ENCODE measurements at regions of chr12 and their contacts with region 1.

Region 1: GRCh38 chr12:48924617-48925303 is 532 bp downstream of the FKBP11 start:
- DNase-seq: peak; percentile 77
- H3K4me3 ChIP-seq: peak overlapping the region; percentile 62 to 81 (median 78)
- H3K27ac ChIP-seq: peak overlapping the region in 3 of 4 donors; percentile 57 to 60 (median 58)
- H3K4me1 ChIP-seq: peaks cover 0 to 14% (median 8%) of the 10 kb centered on the region in 4 donors
- H3K27me3 ChIP-seq: no peaks in the 10 kb centered on the region
- CTCF ChIP-seq: peak; percentile 17 to 39 (median 32)
- EP300 ChIP-seq: no peak
- POLR2A ChIP-seq: no peak

Region 2: DNA sequence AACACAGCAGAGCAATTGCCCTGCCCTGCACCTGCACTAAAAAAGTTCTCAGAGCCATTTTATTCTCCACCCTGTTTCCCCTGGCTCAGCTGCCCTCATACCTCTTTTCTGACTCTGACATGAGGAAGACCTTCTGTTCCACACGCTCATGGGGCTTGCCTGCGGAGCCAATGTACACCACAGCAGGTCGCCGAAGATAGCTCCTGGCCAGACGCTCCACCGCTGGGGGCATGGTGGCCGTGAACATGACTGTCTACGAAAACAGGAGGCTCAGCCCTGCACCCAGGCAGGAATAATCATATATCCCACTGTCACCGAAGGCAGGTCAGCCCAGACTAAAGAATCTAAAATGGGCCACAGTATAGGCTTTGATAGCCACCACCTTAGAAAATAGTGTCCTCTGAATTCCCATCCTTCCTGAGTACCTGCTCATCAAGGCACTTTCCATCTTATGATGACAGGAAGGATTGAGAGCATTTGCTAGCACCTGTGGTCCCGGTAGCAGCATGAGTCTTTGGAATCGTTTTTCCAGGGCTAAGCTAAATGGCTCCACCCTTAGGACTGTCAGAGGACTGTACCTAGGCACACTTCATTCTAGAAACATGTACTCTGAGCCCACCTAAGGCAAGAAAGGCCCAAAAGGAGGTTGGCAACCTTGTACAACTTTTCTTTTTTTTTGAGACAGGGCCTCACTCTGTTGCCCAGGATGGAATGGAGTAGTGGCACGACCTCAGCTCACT is 92.3 kb before region 1 on chr12:
- intact Hi-C with region 1: no loop called
- DNase-seq: no peak
- H3K4me3 ChIP-seq: no peak overlapping the region
- H3K27ac ChIP-seq: no peak overlapping the region
- H3K4me1 ChIP-seq: no peaks in the 10 kb centered on the region
- H3K27me3 ChIP-seq: no peaks in the 10 kb centered on the region
- CTCF ChIP-seq: no peak
- EP300 ChIP-seq: no peak
- POLR2A ChIP-seq: no peak

Region 3: DNA sequence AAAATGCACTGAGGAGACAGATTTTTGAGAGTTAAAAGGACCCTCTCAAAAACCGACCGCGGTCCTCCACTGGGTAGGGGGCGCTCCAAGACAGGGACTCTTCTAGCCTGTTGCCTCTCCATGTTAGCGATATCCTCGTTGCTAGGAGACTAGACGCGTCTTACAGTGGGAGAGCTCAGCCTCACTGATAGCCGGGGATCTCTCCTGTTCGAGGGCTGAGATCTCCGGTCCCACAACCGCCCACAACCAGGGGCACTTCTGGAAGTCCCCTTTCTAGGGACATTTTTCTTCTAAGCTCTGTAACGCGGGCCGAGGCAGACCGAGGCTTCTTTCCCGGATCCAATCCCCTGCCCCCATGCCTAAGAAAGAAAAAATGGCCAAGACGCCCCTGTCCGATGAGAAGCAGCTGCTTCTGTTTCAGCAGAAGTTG is 20.8 kb before region 1 on chr12:
- intact Hi-C with region 1: no loop called
- DNase-seq: peak; percentile 84
- H3K4me3 ChIP-seq: peak overlapping the region; percentile 5 to 43 (median 38)
- H3K27ac ChIP-seq: no peak overlapping the region
- H3K4me1 ChIP-seq: peaks cover 0 to 8% (median 2%) of the 10 kb centered on the region in 4 donors
- H3K27me3 ChIP-seq: no peaks in the 10 kb centered on the region
- CTCF ChIP-seq: peak in 1 of 4 experiments; percentile 55
- EP300 ChIP-seq: no peak
- POLR2A ChIP-seq: no peak

Region 4: DNA sequence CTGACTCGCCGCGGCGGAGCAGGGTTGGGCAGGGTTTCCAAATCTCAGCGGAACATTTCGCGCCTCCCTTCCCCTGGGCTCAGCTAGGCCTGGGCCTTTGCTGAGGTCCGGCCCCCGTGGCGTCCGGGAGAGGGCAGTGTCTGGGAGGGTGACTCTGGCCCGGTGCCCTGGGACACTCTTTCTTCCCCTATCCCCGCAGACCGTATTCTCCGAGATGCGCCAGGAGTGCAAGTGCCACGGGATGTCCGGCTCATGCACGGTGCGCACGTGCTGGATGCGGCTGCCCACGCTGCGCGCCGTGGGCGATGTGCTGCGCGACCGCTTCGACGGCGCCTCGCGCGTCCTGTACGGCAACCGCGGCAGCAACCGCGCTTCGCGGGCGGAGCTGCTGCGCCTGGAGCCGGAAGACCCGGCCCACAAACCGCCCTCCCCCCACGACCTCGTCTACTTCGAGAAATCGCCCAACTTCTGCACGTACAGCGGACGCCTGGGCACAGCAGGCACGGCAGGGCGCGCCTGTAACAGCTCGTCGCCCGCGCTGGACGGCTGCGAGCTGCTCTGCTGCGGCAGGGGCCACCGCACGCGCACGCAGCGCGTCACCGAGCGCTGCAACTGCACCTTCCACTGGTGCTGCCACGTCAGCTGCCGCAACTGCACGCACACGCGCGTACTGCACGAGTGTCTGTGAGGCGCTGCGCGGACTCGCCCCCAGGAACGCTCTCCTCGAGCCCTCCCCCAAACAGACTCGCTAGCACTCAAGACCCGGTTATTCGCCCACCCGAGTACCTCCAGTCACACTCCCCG is 56.4 kb after region 1 on chr12:
- intact Hi-C with region 1: loop called (anchors 5 kb)
- DNase-seq: no peak
- H3K4me3 ChIP-seq: peak overlapping the region in 2 of 4 donors; percentile 34 to 39
- H3K27ac ChIP-seq: no peak overlapping the region
- H3K4me1 ChIP-seq: peaks cover 0 to 42% (median 41%) of the 10 kb centered on the region in 4 donors
- H3K27me3 ChIP-seq: peaks cover 53 to 89% (median 74%) of the 10 kb centered on the region in 3 donors
- CTCF ChIP-seq: no peak
- EP300 ChIP-seq: no peak
- POLR2A ChIP-seq: no peak

Region 5: DNA sequence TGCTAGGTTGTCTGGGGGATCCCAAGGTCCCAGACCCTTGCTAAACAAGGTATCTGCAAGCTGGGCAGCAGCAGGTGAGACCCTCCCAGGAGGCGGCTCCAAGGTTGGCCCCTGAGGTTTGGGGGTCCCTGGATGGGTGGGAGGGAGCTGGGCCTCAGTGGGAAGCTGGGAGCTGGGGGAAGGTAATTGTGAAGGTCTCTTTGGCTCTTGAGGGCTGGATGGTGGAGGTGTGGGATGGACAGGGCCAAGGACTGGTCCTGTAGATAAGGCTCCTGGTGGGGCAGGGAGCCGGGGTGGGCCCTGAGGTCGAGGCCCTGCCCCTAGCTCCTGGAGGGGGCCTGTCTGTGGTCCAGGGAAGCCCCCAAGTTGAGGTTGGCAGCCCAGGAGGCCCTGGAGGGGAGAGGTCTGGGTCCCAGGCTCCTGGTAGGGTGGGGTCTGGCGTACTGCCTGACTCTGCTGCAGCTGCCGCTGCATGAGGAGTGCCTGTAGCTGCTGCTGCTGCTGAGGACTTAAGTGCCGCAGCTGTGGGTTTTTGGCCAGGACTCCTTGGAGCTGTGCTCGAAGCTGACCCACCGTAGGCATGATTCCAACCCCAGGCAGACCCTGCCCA is 106.9 kb after region 1 on chr12:
- intact Hi-C with region 1: no loop called
- DNase-seq: no peak
- H3K4me3 ChIP-seq: no peak overlapping the region
- H3K27ac ChIP-seq: no peak overlapping the region
- H3K4me1 ChIP-seq: peaks cover 0 to 14% (median 0%) of the 10 kb centered on the region in 4 donors
- H3K27me3 ChIP-seq: no peaks in the 10 kb centered on the region
- CTCF ChIP-seq: no peak
- EP300 ChIP-seq: no peak
- POLR2A ChIP-seq: no peak

Region 6: GRCh38 chr12:49232940-49233841 is 308.4 kb after region 1 on chr12:
- intact Hi-C with region 1: no loop called
- DNase-seq: peak; percentile 80
- H3K4me3 ChIP-seq: peak overlapping the region in 3 of 4 donors; percentile 51 to 59 (median 54)
- H3K27ac ChIP-seq: peak overlapping the region; percentile 85 to 94 (median 88)
- H3K4me1 ChIP-seq: peaks cover 0 to 30% (median 27%) of the 10 kb centered on the region in 4 donors
- H3K27me3 ChIP-seq: no peaks in the 10 kb centered on the region
- CTCF ChIP-seq: peak in 1 of 4 experiments; percentile 30
- EP300 ChIP-seq: no peak
- POLR2A ChIP-seq: no peak